ENCODE measurements at regions of chr10 and their contacts with region 1.

Region 1: DNA sequence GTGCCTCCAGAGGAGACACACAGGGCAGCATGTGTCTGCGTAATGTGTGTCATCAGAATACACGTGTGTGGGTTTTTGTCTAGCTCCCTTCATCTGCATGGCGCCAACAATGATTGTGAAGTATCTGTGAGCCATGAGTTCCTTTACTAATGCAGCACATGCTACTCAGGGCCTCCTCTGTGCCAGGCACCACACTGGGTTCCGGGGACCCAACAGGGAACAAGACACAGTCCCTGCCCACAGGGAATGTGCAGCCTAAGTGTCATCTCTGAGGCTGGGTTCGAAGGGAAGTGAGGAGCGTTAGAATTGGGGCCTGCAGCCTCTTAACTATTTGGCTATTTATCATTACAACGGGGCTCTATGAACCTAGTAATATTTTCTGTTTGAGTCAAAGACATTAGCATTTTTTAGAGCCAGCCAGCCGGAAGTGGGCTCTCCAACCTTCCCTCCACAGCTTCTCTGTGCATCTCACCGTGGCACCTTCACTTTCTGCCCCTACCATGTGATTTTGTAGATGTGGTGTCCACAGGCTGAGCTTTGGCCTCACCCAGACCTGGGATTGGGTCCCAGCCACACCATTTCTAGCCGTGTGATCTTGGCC is 43.9 kb upstream of the SRGN start:
- DNase-seq: no peak
- H3K4me3 ChIP-seq: no peak overlapping the region
- H3K4me3 Mint-ChIP-seq: no peak overlapping the region
- H3K27ac Mint-ChIP-seq: no peak overlapping the region
- H3K4me1 ChIP-seq: no peaks in the 10 kb centered on the region
- H3K4me1 Mint-ChIP-seq: no peaks in the 10 kb centered on the region
- H3K27me3 ChIP-seq: no peaks in the 10 kb centered on the region
- H3K27me3 Mint-ChIP-seq: no peaks in the 10 kb centered on the region
- CTCF ChIP-seq: no peak

Region 2: DNA sequence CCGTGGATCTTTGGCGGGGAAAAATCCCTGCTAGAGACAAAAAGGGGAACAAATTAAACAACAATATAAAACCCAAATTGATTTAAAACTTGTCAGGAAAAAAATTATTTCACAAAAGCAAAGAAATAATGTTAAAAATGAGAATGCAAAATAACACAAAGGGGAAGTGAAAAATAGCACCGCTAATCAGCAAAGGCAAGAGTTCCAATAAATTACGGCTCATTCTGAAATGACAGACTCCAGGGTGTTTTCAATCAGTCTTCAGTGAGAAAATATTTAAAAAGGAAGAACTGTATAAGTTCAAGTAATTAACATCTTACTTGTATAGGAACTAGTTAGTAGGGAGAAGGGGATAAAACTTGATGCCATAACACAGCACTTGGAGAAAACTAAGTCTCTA is 1781.4 kb before region 1 on chr10:
- CTCF ChIA-PET with region 1: no interaction called
- POLR2A ChIA-PET with region 1: no interaction called
- intact Hi-C with region 1: no loop called
- DNase-seq: no peak
- H3K4me3 ChIP-seq: no peak overlapping the region
- H3K4me3 Mint-ChIP-seq: no peak overlapping the region
- H3K27ac Mint-ChIP-seq: no peak overlapping the region
- H3K4me1 ChIP-seq: peaks cover 39% of the 10 kb centered on the region
- H3K4me1 Mint-ChIP-seq: peaks cover 53% of the 10 kb centered on the region
- H3K27me3 ChIP-seq: no peaks in the 10 kb centered on the region
- H3K27me3 Mint-ChIP-seq: no peaks in the 10 kb centered on the region
- CTCF ChIP-seq: no peak

Region 3: GRCh38 chr10:69078311-69078710 is 34.3 kb after region 1 on chr10:
- CTCF ChIA-PET with region 1: no interaction called
- POLR2A ChIA-PET with region 1: interaction called, 13 read pairs
- intact Hi-C with region 1: no loop called
- DNase-seq: no peak
- H3K4me3 ChIP-seq: no peak overlapping the region
- H3K4me3 Mint-ChIP-seq: no peak overlapping the region
- H3K27ac Mint-ChIP-seq: no peak overlapping the region
- H3K4me1 ChIP-seq: no peaks in the 10 kb centered on the region
- H3K4me1 Mint-ChIP-seq: no peaks in the 10 kb centered on the region
- H3K27me3 ChIP-seq: no peaks in the 10 kb centered on the region; the same call in 1 of the 2 replicates
- H3K27me3 Mint-ChIP-seq: peaks cover 11% of the 10 kb centered on the region
- CTCF ChIP-seq: no peak

Region 4: GRCh38 chr10:69146759-69147158 is 102.7 kb after region 1 on chr10:
- CTCF ChIA-PET with region 1: no interaction called
- POLR2A ChIA-PET with region 1: no interaction called
- intact Hi-C with region 1: no loop called
- DNase-seq: no peak
- H3K4me3 ChIP-seq: no peak overlapping the region
- H3K4me3 Mint-ChIP-seq: no peak overlapping the region
- H3K27ac Mint-ChIP-seq: no peak overlapping the region
- H3K4me1 ChIP-seq: no peaks in the 10 kb centered on the region
- H3K4me1 Mint-ChIP-seq: no peaks in the 10 kb centered on the region
- H3K27me3 ChIP-seq: no peaks in the 10 kb centered on the region
- H3K27me3 Mint-ChIP-seq: no peaks in the 10 kb centered on the region
- CTCF ChIP-seq: no peak

Region 5: GRCh38 chr10:69318106-69318866 is 274.3 kb after region 1 on chr10:
- CTCF ChIA-PET with region 1: no interaction called
- POLR2A ChIA-PET with region 1: no interaction called
- intact Hi-C with region 1: no loop called
- DNase-seq: peak; percentile 92 to 98
- H3K4me3 ChIP-seq: peak overlapping the region; percentile 64
- H3K4me3 Mint-ChIP-seq: peak overlapping the region; percentile 87
- H3K27ac Mint-ChIP-seq: peak overlapping the region; percentile 53
- H3K4me1 ChIP-seq: peaks cover 48% of the 10 kb centered on the region
- H3K4me1 Mint-ChIP-seq: peaks cover 25% of the 10 kb centered on the region
- H3K27me3 ChIP-seq: no peaks in the 10 kb centered on the region
- H3K27me3 Mint-ChIP-seq: no peaks in the 10 kb centered on the region
- CTCF ChIP-seq: no peak

Region 6: GRCh38 chr10:70404036-70404786 is 1360.2 kb after region 1 on chr10 and contains the start of gene EIF4EBP2:
- CTCF ChIA-PET with region 1: no interaction called
- POLR2A ChIA-PET with region 1: no interaction called
- intact Hi-C with region 1: no loop called
- DNase-seq: peak; percentile 99 to 100
- H3K4me3 ChIP-seq: peak within 1 kb of the TSS; percentile 99
- H3K4me3 Mint-ChIP-seq: peak within 1 kb of the TSS; percentile 95
- H3K27ac Mint-ChIP-seq: peak within 1 kb of the TSS; percentile 91
- H3K4me1 ChIP-seq: peaks cover 15% of the 10 kb centered on the region
- H3K4me1 Mint-ChIP-seq: peaks cover 47% of the 10 kb centered on the region
- H3K27me3 ChIP-seq: no peaks in the 10 kb centered on the region
- H3K27me3 Mint-ChIP-seq: no peaks in the 10 kb centered on the region
- CTCF ChIP-seq: no peak
- total RNA-seq, gene EIF4EBP2: 166 and 168 TPM in 2 replicates

Measured in Caco-2 (cell line).